ENCODE measurements at regions of chr10 and their contacts with region 1.

Region 1: GRCh38 chr10:44878706-44879530 is 32.2 kb upstream of the TMEM72 start:
- DNase-seq: peak; percentile 86
- CTCF ChIP-seq: peak; percentile 1

Region 2: GRCh38 chr10:44857363-44858016 is 21.4 kb before region 1 on chr10:
- CTCF ChIA-PET with region 1: interaction called, 58 read pairs
- POLR2A ChIA-PET with region 1: no interaction called
- DNase-seq: peak; percentile 80
- CTCF ChIP-seq: peak; percentile 99

Region 3: GRCh38 chr10:44864637-44865288 is 14.2 kb before region 1 on chr10:
- CTCF ChIA-PET with region 1: interaction called, 58 read pairs
- POLR2A ChIA-PET with region 1: no interaction called
- DNase-seq: peak; percentile 89
- CTCF ChIP-seq: peak; percentile 96

Region 4: GRCh38 chr10:44895280-44895679 is 16.4 kb after region 1 on chr10:
- CTCF ChIA-PET with region 1: no interaction called
- POLR2A ChIA-PET with region 1: no interaction called
- DNase-seq: no peak
- CTCF ChIP-seq: no peak

Measured in GM10248 (cell line).